ENCODE measurements at regions of chr3 and their contacts with region 1.

Region 1: DNA sequence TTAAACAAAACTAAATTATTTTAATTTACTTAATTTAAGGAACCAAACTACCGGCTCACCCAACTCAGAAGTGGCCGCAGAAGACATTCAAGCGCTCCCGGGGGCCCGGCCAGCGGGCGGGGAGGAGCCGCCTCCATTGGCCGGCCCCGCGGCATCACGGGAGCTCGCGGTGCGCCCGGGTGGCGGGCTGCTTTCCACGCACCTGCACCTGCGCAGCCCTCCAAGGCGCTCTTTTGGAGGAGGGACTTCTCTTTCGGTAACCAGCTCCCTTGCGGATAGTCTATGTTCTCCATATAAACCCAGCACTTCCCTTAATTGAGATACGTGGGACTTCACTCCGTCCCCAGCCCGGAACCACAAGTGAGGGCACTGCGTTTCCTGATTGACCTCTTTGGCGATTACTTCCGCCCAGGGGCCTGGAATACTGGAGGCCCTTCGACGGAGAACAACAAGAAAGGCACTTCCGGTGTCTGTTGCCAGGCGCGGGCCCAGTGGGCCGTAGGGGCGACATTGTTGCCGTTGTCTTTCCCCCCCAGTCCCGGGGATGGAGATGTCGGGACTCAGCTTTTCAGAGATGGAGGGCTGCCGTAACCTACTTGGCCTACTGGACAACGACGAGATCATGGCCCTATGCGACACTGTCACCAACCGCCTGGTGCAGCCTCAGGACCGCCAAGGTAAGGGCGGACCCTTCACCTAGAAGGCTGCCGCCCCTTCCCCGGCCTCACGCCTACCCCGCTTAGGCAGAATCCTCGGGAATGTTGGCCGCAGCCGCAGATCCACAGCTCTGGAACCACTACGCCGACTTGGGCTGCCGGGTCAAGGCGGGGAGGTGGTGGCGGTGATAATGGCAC is at the start of gene C3orf38:
- DNase-seq: peak; percentile 83 to 86 (median 85)
- H3K4me3 ChIP-seq: peak within 1 kb of the TSS; percentile 96 to 99
- H3K4me3 Mint-ChIP-seq: peak within 1 kb of the TSS; percentile 96 to 99 (median 98)
- H3K27ac ChIP-seq: peak within 1 kb of the TSS; percentile 90
- H3K27ac Mint-ChIP-seq: peak within 1 kb of the TSS; percentile 95 to 99 (median 98)
- H3K4me1 ChIP-seq: peaks cover 36% of the 10 kb centered on the region
- H3K4me1 Mint-ChIP-seq: peaks cover 15 to 43% (median 26%) of the 10 kb centered on the region in 4 donors
- H3K27me3 ChIP-seq: no peaks in the 10 kb centered on the region
- H3K27me3 Mint-ChIP-seq: no peaks in the 10 kb centered on the region
- total RNA-seq, gene C3orf38: 36.5 to 38.5 TPM

Region 2: DNA sequence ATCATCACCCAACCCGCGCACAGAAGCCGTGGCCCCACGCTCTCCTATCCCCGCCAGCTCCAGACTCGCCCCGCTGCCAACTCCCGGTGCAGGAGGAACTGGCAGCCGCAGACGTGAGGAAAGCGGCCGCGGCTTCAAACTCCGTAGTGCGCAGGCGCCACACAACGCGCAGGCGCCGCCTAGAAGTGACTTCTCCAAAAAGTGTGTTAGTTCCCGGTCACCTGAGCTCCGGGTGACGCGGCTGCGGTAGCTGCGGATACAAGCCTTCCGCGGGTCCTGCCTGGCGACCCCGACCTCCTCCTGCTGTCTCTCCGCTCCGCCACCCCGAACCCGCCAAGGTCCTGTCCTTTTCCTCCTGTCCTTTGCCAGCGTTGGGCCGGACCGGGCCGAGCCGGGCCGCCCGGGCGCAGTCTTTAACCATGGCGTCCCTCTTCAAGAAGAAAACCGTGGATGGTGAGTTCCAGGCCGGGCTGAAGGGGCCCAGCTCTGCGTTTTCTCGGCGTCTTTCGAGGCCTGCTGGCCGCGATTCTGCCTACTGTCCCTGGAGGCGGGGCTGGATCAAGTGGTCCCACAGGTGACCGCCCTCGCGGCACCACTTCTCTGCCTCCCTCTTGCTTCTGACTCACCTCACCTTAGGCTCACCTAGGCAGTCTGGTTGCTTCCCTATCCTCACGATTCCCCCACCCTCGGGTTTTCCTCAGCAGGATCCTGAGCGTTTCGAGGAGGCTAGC is 922.5 kb before region 1 on chr3 and contains the start of gene CHMP2B:
- CTCF ChIA-PET with region 1: interaction called, 3 read pairs
- POLR2A ChIA-PET with region 1: interaction called, 15 read pairs
- intact Hi-C with region 1: loop called (anchors 1 kb)
- DNase-seq: peak; percentile 90 to 92 (median 91)
- H3K4me3 ChIP-seq: peak within 1 kb of the TSS; percentile 71 to 92
- H3K4me3 Mint-ChIP-seq: peak within 1 kb of the TSS; percentile 97 to 99 (median 98)
- H3K27ac ChIP-seq: peak within 1 kb of the TSS; percentile 86
- H3K27ac Mint-ChIP-seq: peak within 1 kb of the TSS; percentile 96 to 99 (median 98)
- H3K4me1 ChIP-seq: peaks cover 35% of the 10 kb centered on the region
- H3K4me1 Mint-ChIP-seq: peaks cover 33 to 56% (median 38%) of the 10 kb centered on the region in 4 donors
- H3K27me3 ChIP-seq: no peaks in the 10 kb centered on the region
- H3K27me3 Mint-ChIP-seq: peaks cover 6 to 7% of the 10 kb centered on the region in 2 donors
- total RNA-seq, gene CHMP2B: 25.9 to 30.8 TPM

Region 3: GRCh38 chr3:87975716-87976115 is 174.0 kb before region 1 on chr3:
- CTCF ChIA-PET with region 1: no interaction called
- POLR2A ChIA-PET with region 1: no interaction called
- intact Hi-C with region 1: no loop called
- DNase-seq: no peak
- H3K4me3 ChIP-seq: no peak overlapping the region
- H3K4me3 Mint-ChIP-seq: no peak overlapping the region
- H3K27ac ChIP-seq: no peak overlapping the region
- H3K27ac Mint-ChIP-seq: no peak overlapping the region
- H3K4me1 ChIP-seq: no peaks in the 10 kb centered on the region
- H3K4me1 Mint-ChIP-seq: no peaks in the 10 kb centered on the region
- H3K27me3 ChIP-seq: no peaks in the 10 kb centered on the region
- H3K27me3 Mint-ChIP-seq: peaks cover 5 to 14% of the 10 kb centered on the region in 2 donors

Region 4: DNA sequence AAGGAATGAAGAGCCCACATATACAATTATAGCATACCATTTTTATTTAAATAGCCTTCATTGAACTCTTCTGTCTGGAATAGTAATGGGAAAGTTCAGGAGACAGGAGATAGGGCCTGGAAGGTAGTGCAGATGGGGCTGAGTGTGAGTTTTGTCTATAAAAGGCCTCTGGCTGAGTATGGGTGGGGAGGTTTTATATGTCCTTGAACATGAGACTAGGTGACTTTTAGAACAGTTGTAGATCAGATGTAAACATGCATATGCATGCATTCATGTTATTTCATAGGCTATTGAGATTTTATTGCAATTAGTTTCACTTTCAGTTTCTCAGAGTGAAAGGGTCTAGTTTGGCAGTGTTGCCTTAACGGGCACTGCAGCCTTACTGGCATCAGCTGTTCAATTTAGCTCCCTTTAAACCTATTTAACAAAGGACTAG is 118.1 kb before region 1 on chr3:
- CTCF ChIA-PET with region 1: interaction called, 3 read pairs
- POLR2A ChIA-PET with region 1: interaction called, 21 read pairs
- intact Hi-C with region 1: no loop called
- DNase-seq: peak in 4 of 5 donors; percentile 49 to 62 (median 58)
- H3K4me3 ChIP-seq: peak overlapping the region; percentile 52 to 54
- H3K4me3 Mint-ChIP-seq: peak overlapping the region; percentile 78 to 92 (median 90)
- H3K27ac ChIP-seq: peak overlapping the region; percentile 61
- H3K27ac Mint-ChIP-seq: peak overlapping the region; percentile 80 to 98 (median 96)
- H3K4me1 ChIP-seq: peaks cover 19% of the 10 kb centered on the region
- H3K4me1 Mint-ChIP-seq: peaks cover 22 to 41% (median 32%) of the 10 kb centered on the region in 4 donors
- H3K27me3 ChIP-seq: no peaks in the 10 kb centered on the region
- H3K27me3 Mint-ChIP-seq: no peaks in the 10 kb centered on the region

Region 5: GRCh38 chr3:88795502-88795901 is 645.8 kb after region 1 on chr3:
- CTCF ChIA-PET with region 1: no interaction called
- POLR2A ChIA-PET with region 1: no interaction called
- intact Hi-C with region 1: no loop called
- DNase-seq: no peak
- H3K4me3 ChIP-seq: no peak overlapping the region
- H3K4me3 Mint-ChIP-seq: no peak overlapping the region
- H3K27ac ChIP-seq: no peak overlapping the region
- H3K27ac Mint-ChIP-seq: no peak overlapping the region
- H3K4me1 ChIP-seq: no peaks in the 10 kb centered on the region
- H3K4me1 Mint-ChIP-seq: no peaks in the 10 kb centered on the region
- H3K27me3 ChIP-seq: no peaks in the 10 kb centered on the region
- H3K27me3 Mint-ChIP-seq: no peaks in the 10 kb centered on the region

Measured in CD4-positive, alpha-beta memory T cell (primary cell).